Heart left ventricle (tissue), 16 donors: ENCODE measurements at regions of chr4 and their contacts with region 1.

Region 1: GRCh38 chr4:143207557-143207956 is 22.8 kb downstream of the USP38 start:
- DNase-seq: no peak
- ATAC-seq: peak in 2 of 4 donors; percentile 61 to 69
- H3K4me3 ChIP-seq: no peak overlapping the region
- H3K27ac ChIP-seq: no peak overlapping the region
- H3K4me1 ChIP-seq: peaks cover 0 to 10% (median 4%) of the 10 kb centered on the region in 12 donors
- H3K27me3 ChIP-seq: no peaks in the 10 kb centered on the region
- CTCF ChIP-seq: peak; percentile 14 to 67 (median 51)
- POLR2A ChIP-seq: no peak

Region 2: DNA sequence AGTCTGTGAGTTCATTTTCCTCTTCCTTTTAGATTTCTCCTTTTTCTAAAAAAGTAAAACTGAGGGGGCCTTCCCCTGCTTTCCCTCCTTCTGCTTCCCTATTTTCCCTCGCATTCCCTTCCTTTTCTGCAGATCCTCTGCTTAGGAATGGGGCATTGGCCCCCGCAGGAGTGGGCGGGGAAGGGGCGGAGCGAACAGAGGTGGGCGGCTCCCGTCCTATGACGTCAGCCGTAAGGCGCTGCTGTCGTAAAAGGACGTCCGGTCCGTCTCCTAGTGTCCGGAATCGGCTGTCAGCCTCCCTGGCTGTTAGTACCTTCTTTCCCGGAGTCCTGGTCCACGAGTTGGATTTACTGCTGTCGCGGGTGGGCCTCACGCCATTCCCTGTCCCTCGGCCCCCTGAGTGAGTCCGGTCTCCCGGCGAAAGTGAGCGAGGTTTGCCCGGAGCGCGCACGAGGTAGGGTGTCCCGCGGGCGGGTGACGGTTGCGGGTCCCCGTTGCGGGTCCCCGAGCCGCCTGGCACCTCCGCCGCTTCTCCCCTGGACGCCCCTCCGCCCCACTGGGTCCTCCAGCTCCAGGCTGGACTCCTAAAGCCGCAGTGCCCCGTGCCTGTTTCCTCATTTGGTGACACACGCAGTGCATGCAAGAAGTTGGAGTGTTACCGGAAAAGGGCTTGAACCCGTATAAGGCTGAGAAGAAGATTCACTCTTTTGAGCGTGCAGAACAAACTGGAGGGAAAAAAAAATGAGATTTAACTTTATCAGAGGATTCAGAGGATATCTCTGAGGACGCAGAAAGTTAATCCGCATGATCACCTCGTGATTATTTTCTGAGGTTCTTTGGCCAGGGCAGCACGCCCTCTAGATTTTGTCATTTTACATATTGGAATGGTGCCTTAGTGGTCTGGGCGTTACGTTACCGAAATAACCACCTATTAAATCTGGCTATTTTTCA is 1986.6 kb before region 1 on chr4 and contains the start of gene ZNF330:
- intact Hi-C with region 1: loop called in 1 of 10 experiments (anchors 10 kb)
- DNase-seq: peak; percentile 92 to 96 (median 94)
- ATAC-seq: peak; percentile 94 to 97 (median 96)
- H3K4me3 ChIP-seq: peak within 1 kb of the TSS; percentile 66 to 98 (median 83)
- H3K27ac ChIP-seq: peak within 1 kb of the TSS; percentile 89 to 99 (median 94)
- H3K4me1 ChIP-seq: peaks cover 0 to 53% (median 18%) of the 10 kb centered on the region in 12 donors
- H3K27me3 ChIP-seq: no peaks in the 10 kb centered on the region
- CTCF ChIP-seq: peak in 6 of 12 donors; percentile 12 to 43 (median 29)
- POLR2A ChIP-seq: peak; percentile 58 to 93
- total RNA-seq, gene ZNF330: 54.4 to 183 (median 141) TPM

Region 3: DNA sequence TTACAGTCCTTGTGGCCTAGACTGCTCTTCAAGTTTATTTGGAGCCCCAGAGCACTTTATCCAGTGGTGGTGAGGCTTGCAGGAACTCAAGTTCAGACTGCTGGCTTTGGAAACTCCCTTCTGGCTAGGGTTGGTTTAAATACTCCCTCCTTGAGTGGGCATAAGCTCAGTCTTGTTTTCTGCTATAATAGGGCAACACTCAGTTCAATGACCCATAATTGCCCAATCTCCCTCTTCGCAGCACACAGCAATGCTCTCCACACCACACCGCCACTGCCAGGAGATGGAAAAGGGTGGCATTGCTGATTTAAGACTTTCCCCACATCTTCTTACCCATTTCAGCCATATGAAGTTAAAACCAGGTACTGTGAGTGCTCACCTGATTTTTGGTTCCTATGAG is 50.7 kb before region 1 on chr4:
- intact Hi-C with region 1: no loop called
- DNase-seq: no peak
- ATAC-seq: no peak
- H3K4me3 ChIP-seq: no peak overlapping the region
- H3K27ac ChIP-seq: no peak overlapping the region
- H3K4me1 ChIP-seq: no peaks in the 10 kb centered on the region
- H3K27me3 ChIP-seq: no peaks in the 10 kb centered on the region
- CTCF ChIP-seq: no peak
- POLR2A ChIP-seq: no peak

Region 4: GRCh38 chr4:143294310-143294709 is 86.8 kb after region 1 on chr4:
- intact Hi-C with region 1: loop called in 1 of 10 experiments (anchors 5 kb)
- DNase-seq: peak; percentile 75 to 91 (median 86)
- ATAC-seq: peak; percentile 63 to 93 (median 92)
- H3K4me3 ChIP-seq: no peak overlapping the region
- H3K27ac ChIP-seq: peak overlapping the region in 8 of 12 donors; percentile 4 to 54 (median 26)
- H3K4me1 ChIP-seq: peaks cover 0 to 28% (median 12%) of the 10 kb centered on the region in 12 donors
- H3K27me3 ChIP-seq: no peaks in the 10 kb centered on the region
- CTCF ChIP-seq: no peak
- POLR2A ChIP-seq: no peak

Region 5: DNA sequence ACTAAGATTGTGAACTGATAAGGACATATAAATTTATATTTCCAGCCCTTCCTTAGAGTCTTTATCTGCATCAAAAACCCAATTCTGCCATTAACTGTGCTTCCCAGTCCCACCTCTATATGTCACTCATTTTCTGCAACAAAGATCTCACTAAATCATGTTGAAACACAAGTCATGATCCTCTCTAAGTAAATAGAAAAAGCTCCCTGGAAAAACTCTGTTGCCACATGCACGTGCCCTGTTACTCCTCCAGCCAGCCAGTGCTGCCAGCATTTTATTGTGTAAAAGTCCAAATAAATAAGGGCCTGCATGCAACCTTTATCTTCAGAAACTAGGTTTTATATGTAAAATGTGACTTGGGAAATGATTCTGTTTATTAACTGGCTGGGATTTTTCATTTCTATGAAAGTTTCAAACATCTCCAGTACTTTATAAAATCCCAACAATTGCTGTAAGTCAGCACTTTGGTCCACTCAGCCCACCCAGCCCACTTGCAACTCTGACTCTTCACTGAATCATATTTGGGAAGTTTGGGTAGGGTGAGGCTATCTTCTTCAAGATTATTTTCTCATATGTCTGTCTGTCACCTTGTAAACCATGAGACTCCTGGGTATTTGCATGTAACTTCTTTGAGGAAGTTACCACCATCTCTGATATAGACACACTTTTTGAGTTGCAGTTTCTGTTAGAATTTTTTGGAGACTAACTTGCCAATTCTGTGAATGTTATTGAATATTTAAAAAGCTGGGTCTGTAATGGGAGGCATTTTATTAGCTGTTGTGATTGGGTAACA is 266.0 kb after region 1 on chr4:
- intact Hi-C with region 1: loop called in 1 of 10 experiments (anchors 5 kb)
- DNase-seq: no peak
- ATAC-seq: peak in 1 of 4 donors; percentile 17
- H3K4me3 ChIP-seq: no peak overlapping the region
- H3K27ac ChIP-seq: no peak overlapping the region
- H3K4me1 ChIP-seq: no peaks in the 10 kb centered on the region
- H3K27me3 ChIP-seq: no peaks in the 10 kb centered on the region
- CTCF ChIP-seq: no peak
- POLR2A ChIP-seq: no peak

Region 6: DNA sequence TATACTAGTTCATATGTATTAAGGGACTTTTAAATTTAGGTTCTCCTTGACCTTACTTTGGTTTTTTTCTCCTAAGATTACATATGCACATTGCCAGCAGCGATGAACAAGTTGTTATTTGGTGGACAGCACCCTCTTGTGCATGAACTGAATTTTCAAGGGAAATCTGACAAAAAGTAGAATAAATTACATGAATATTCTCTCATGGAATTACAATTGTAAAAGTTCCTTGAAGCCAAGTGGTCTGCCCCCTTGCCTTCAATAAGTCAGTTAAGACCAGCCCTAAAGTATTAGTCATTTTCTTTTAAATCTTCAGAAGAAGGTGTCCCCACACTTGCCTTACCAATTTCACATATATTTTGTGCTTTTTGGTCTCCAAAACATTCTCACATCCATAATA is 275.3 kb after region 1 on chr4:
- intact Hi-C with region 1: loop called (anchors 2 to 5 kb)
- DNase-seq: peak in 1 of 5 donors; percentile 23
- ATAC-seq: peak in 3 of 4 donors; percentile 20 to 72 (median 57)
- H3K4me3 ChIP-seq: no peak overlapping the region
- H3K27ac ChIP-seq: no peak overlapping the region
- H3K4me1 ChIP-seq: peaks cover 0 to 6% (median 0%) of the 10 kb centered on the region in 12 donors
- H3K27me3 ChIP-seq: no peaks in the 10 kb centered on the region
- CTCF ChIP-seq: peak; percentile 38 to 79 (median 68)
- POLR2A ChIP-seq: no peak